Esophagus muscularis mucosa (tissue), 4 donors: ENCODE measurements at regions of chr14 and their contacts with region 1.

Region 1: DNA sequence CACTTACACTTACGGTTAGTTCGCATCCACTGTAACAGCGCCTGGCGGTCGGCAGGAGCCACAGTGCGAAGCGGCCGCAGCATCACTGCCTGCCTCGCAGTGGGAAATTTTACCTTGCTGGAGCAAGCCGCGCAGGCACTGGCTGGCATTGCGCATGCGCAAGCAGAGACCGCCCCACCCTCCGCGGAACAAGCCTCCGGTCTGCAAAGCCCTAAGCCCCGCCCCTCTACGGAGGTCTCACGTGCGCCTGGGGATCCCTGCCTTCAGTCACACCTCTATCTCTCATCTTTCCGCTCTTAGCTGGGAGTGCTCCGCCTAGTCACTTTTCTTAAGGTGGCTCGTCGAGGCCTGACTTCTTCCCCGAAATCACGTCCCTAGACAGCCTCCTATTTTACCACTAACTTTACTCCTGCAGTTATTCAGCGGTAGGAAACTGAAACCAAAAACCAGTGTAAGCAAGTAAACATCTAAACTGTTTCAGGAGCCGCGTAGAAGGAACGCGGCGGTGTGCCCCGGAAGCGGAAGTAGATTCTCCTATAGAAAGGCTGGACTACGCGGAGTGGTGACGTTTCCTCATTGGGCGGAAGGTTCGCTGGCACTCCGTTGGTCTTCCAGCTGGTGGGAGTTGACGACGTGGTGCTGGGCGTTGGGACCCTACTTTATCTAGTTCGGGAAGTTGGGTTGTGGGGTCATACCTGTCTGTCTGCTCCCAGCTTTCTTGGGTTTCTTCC is at the start of gene SRP54:
- DNase-seq: peak; percentile 99
- H3K4me3 ChIP-seq: peak within 1 kb of the TSS; percentile 73 to 93 (median 80)
- H3K27ac ChIP-seq: peak within 1 kb of the TSS; percentile 92 to 98 (median 97)
- H3K4me1 ChIP-seq: peaks cover 36 to 55% (median 44%) of the 10 kb centered on the region in 4 donors
- H3K27me3 ChIP-seq: no peaks in the 10 kb centered on the region
- CTCF ChIP-seq: peak in 2 of 3 experiments; percentile 26 to 33
- EP300 ChIP-seq: no peak
- POLR2A ChIP-seq: peak; percentile 45
- total RNA-seq, gene SRP54: 31.2 to 52.7 (median 39.3) TPM

Region 2: DNA sequence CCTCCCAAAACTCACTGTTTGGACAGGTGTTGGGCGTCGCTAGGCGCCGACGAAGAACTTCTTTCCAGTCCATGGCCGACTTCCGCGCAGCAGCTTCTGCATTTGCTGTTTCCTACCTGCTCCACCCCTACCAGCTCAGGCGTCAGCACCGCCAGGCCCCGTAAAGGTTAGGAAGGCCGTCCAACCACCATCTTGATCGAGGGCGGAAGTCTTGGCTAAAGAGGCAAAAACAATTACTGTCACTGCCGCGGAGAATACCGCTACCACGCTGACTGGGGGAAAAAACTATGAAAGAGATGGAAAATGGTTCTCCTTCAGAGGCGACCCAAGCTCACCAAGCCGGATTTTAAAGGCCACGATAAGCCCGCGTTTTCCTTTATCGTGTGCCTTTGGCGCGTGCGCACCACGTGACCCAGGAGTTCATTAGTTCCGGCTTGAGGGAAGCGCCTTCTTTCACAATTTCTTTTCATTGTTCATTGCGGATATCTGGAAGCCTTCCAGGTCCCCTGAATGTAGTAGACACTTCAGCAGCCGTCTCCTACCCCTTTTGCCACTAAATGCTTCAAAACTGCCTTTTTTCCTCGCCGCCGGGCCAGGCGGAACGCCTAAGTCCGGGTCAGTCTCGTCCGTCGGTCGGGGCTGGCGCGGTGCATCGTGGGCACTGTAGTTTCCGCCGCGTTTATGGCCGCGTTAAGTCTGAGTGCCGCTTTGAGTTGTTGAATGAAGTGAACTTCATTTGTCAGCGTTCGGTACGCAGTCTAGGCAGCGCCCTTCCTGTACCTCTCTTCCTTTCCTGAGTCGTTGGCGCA is 139.5 kb after region 1 on chr14 and contains the starts of genes PPP2R3C and PRORP:
- intact Hi-C with region 1: loop called (anchors 5 kb)
- DNase-seq: peak; percentile 98
- H3K4me3 ChIP-seq: peak within 1 kb of the TSS; percentile 69 to 78 (median 71)
- H3K27ac ChIP-seq: peak within 1 kb of the TSS; percentile 90 to 95 (median 95)
- H3K4me1 ChIP-seq: peaks cover 17 to 64% (median 47%) of the 10 kb centered on the region in 4 donors
- H3K27me3 ChIP-seq: no peaks in the 10 kb centered on the region
- CTCF ChIP-seq: no peak
- EP300 ChIP-seq: peak; percentile 49
- POLR2A ChIP-seq: no peak
- total RNA-seq, gene PPP2R3C: 29.5 to 48.6 (median 36.8) TPM
- total RNA-seq, gene PRORP: 9.6 to 20.0 (median 17.3) TPM